ENCODE measurements at regions of chr12 and their contacts with region 1.

Region 1: GRCh38 chr12:100154474-100155247 is 12.0 kb upstream of the BLTP3B start:
- DNase-seq: peak; percentile 94
- ATAC-seq: peak; percentile 71
- H3K4me3 Mint-ChIP-seq: no peak overlapping the region
- H3K27ac Mint-ChIP-seq: no peak overlapping the region
- H3K4me1 Mint-ChIP-seq: peaks cover 38% of the 10 kb centered on the region
- H3K27me3 Mint-ChIP-seq: no peaks in the 10 kb centered on the region; the same call in 1 of the 2 replicates
- CTCF ChIP-seq: peak; percentile 94

Region 2: GRCh38 chr12:100128512-100128908 is 26.2 kb before region 1 on chr12:
- CTCF ChIA-PET with region 1: interaction called, 20 read pairs
- POLR2A ChIA-PET with region 1: interaction called, 3 read pairs
- DNase-seq: peak; percentile 49
- ATAC-seq: peak; percentile 98
- H3K4me3 Mint-ChIP-seq: no peak overlapping the region
- H3K27ac Mint-ChIP-seq: no peak overlapping the region
- H3K4me1 Mint-ChIP-seq: peaks cover 18% of the 10 kb centered on the region
- H3K27me3 Mint-ChIP-seq: no peaks in the 10 kb centered on the region
- CTCF ChIP-seq: no peak

Region 3: GRCh38 chr12:100427078-100427477 is 272.4 kb after region 1 on chr12:
- CTCF ChIA-PET with region 1: no interaction called
- POLR2A ChIA-PET with region 1: no interaction called
- DNase-seq: no peak
- ATAC-seq: no peak
- H3K4me3 Mint-ChIP-seq: no peak overlapping the region
- H3K27ac Mint-ChIP-seq: no peak overlapping the region
- H3K4me1 Mint-ChIP-seq: no peaks in the 10 kb centered on the region
- H3K27me3 Mint-ChIP-seq: no peaks in the 10 kb centered on the region
- CTCF ChIP-seq: no peak